Heart left ventricle (tissue), 16 donors: ENCODE measurements at regions of chr3 and their contacts with region 1.

Region 1: DNA sequence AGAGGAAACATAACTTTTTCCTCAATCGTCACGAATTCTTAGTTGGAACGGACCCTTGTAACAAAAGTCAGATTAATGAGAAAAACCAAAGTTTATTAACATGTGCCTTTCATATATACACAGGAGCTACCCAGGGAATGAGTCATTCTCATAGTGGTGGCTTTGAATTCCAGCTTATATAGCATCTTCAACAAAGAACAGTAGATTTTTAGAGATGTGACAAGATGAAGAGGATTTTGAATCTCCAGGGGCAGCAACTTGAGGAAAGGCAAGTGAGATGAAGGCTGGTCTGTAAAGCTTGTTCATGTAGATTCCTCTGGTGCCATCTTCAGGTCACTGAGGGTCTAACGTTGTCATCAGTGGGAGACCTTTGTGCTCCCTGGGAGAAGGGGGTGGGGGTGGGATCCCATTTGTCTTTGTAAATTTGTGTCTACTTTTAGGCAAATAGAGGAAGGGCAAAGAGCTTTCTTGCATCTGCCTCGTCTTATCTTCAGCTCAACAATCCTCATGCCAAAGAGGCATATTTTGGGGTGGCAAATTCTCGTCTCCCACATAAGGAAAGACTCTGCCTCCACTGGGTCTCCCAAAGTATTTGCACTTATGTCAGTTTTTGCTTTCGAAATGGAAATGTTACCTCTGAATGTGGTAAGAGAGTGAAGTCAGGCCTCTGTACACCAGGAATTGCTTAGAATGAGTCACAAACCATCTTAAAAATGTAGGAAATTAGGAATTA is 29.5 kb downstream of the CLEC3B start:
- DNase-seq: no peak
- ATAC-seq: no peak
- H3K4me3 ChIP-seq: no peak overlapping the region
- H3K27ac ChIP-seq: peak overlapping the region in 4 of 12 donors; percentile 4 to 86 (median 78)
- H3K4me1 ChIP-seq: peaks cover 0 to 64% (median 9%) of the 10 kb centered on the region in 12 donors
- H3K27me3 ChIP-seq: no peaks in the 10 kb centered on the region
- CTCF ChIP-seq: peak in 7 of 12 donors; percentile 10 to 33 (median 22)
- POLR2A ChIP-seq: no peak

Region 2: DNA sequence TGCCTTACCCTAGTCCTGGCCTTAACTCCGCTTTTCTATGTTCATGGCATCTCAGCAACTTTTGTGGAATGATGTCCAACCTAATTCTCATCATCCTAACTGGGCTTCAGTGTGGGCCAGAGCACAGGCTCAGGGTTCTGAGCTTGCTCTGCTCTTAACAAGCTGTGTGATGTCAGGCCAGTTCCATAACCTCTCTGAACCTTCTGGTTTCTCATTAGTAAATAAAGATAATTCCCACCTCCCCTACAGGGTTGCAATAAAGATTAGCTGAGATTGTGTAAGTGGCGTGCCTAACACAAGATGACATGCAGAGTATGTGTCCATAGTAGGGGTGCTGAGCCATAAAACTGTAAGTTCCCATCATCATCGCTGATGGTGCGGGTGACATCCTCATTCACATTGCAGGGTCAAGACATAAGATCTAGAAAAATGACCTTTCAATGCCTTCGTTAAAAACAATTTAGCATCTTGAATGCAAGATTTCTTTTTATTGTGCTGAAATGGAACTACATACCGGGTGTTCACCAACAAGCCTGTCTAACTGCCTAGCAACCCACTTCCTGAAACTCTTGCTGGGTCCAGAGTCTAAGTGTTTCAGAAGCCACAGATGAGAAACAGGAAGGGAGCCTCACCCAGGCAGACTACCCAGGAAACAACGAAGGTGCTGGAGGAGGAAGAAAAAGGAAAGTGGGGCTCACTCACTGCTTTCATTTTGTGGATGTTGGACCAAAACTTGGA is 54.4 kb after region 1 on chr3:
- intact Hi-C with region 1: loop called in 2 of 10 experiments (anchors 5 kb)
- DNase-seq: peak in 1 of 5 donors; percentile 20
- ATAC-seq: no peak
- H3K4me3 ChIP-seq: peak overlapping the region in 1 of 12 donors; percentile 3
- H3K27ac ChIP-seq: peak overlapping the region in 1 of 12 donors; percentile 14
- H3K4me1 ChIP-seq: peaks cover 0 to 31% (median 8%) of the 10 kb centered on the region in 12 donors
- H3K27me3 ChIP-seq: no peaks in the 10 kb centered on the region
- CTCF ChIP-seq: no peak
- POLR2A ChIP-seq: no peak

Region 3: GRCh38 chr3:45125550-45126026 is 70.0 kb after region 1 on chr3:
- intact Hi-C with region 1: loop called in 1 of 10 experiments (anchors 5 kb)
- DNase-seq: peak in 4 of 5 donors; percentile 34 to 63 (median 42)
- ATAC-seq: peak; percentile 85 to 91 (median 88)
- H3K4me3 ChIP-seq: no peak overlapping the region
- H3K27ac ChIP-seq: peak overlapping the region in 4 of 12 donors; percentile 28 to 49 (median 42)
- H3K4me1 ChIP-seq: peaks cover 0 to 26% (median 2%) of the 10 kb centered on the region in 12 donors
- H3K27me3 ChIP-seq: no peaks in the 10 kb centered on the region
- CTCF ChIP-seq: no peak
- POLR2A ChIP-seq: no peak

Region 4: GRCh38 chr3:45199837-45200648 is 144.5 kb after region 1 on chr3:
- intact Hi-C with region 1: loop called in 2 of 10 experiments (anchors 5 kb)
- DNase-seq: no peak
- ATAC-seq: peak in 1 of 4 donors; percentile 38
- H3K4me3 ChIP-seq: no peak overlapping the region
- H3K27ac ChIP-seq: no peak overlapping the region
- H3K4me1 ChIP-seq: no peaks in the 10 kb centered on the region
- H3K27me3 ChIP-seq: peaks cover 0 to 8% (median 0%) of the 10 kb centered on the region in 9 donors
- CTCF ChIP-seq: no peak
- POLR2A ChIP-seq: no peak

Region 5: DNA sequence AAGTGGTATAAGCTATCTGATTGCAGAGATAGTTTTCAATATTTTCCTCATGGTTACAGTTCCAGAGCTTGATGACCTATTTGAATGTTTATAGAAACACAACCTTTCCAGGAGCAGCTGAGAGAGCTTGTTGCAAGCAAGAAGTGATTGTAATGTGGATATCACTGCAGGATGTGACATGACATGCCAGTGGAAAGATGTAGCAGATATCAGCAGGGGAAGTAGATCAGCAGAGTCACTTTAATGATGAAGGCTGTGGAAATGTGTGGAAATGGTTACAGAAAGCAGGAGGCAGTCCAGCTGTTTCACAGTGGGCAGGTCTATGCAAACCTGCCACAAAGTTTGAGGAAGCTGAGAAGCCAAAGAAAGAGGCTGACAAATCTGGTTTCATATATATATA is 149.5 kb after region 1 on chr3:
- intact Hi-C with region 1: loop called in 1 of 10 experiments (anchors 5 kb)
- DNase-seq: no peak
- ATAC-seq: no peak
- H3K4me3 ChIP-seq: no peak overlapping the region
- H3K27ac ChIP-seq: no peak overlapping the region
- H3K4me1 ChIP-seq: peaks cover 0 to 4% (median 0%) of the 10 kb centered on the region in 12 donors
- H3K27me3 ChIP-seq: peaks cover 0 to 7% (median 0%) of the 10 kb centered on the region in 9 donors
- CTCF ChIP-seq: no peak
- POLR2A ChIP-seq: no peak

Region 6: DNA sequence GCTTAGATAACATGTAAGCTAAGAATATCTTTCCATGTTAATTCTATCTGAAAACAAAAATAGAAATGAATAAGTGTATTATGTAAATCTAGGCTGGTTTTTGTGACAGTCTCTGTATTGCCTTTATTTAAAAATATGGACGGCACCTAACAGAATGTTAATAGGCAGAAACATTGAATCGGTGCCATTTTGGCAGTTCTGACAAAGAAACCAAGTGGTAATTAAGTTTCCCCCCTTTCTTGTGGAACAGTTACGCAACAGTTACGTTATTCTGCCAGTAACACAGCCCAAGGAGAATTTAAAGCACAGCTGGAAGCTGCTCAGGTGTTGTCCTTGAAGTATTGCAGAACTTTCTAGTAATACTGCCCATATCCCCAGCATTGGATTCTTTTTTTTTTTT is 354.3 kb after region 1 on chr3:
- intact Hi-C with region 1: loop called in 1 of 10 experiments (anchors 10 kb)
- DNase-seq: peak in 1 of 5 donors; percentile 10
- ATAC-seq: peak in 3 of 4 donors; percentile 22 to 58 (median 50)
- H3K4me3 ChIP-seq: no peak overlapping the region
- H3K27ac ChIP-seq: peak overlapping the region in 5 of 12 donors; percentile 3 to 61 (median 34)
- H3K4me1 ChIP-seq: peaks cover 0 to 20% (median 11%) of the 10 kb centered on the region in 12 donors
- H3K27me3 ChIP-seq: no peaks in the 10 kb centered on the region
- CTCF ChIP-seq: no peak
- POLR2A ChIP-seq: no peak